ENCODE measurements at regions of chr7 and their contacts with region 1.

Region 1: GRCh38 chr7:91264046-91264923 is at the start of gene FZD1:
- DNase-seq: peak; percentile 99
- total RNA-seq, gene FZD1: 17.7 to 25.4 TPM

Region 2: GRCh38 chr7:91098566-91098965 is 165.7 kb before region 1 on chr7:
- intact Hi-C with region 1: loop called in 1 of 2 experiments (anchors 10 kb)
- DNase-seq: no peak

Region 3: GRCh38 chr7:92417913-92418312 is 1153.6 kb after region 1 on chr7:
- intact Hi-C with region 1: loop called in 1 of 2 experiments (anchors 10 kb)
- DNase-seq: no peak

Measured in posterior vena cava (tissue), 2 donors.